H1 (cell line): ENCODE measurements at regions of chr16 and their contacts with region 1.

Region 1: DNA sequence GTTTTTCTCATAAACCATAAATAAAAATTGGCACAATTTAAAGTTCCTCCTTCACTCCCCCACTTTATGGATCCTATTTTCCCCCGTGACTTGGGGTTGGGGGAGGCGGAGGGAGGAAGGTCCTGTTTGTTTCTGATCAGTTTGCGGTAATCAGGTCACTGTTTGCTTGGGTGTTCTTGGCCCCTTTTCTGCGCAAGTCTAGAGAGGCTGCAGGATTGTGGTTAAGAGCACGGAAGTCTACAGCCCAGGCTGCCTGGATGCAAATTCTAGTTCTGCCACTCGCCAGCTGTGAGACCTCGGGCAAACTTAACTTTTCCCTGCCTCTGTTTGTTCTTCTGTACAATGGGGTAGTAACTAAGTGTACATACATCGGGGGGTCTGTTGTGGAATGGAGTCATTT is 12.1 kb downstream of the ATP2C2 start:
- DNase-seq: no peak
- H3K4me3 ChIP-seq: no peak overlapping the region
- H3K27ac ChIP-seq: no peak overlapping the region
- H3K4me1 ChIP-seq: peaks cover 0 to 11% (median 5%) of the 10 kb centered on the region in 4 experiments; a peak in 3 of 7 replicates
- H3K27me3 ChIP-seq: no peaks in the 10 kb centered on the region; a peak in 1 of 7 replicates
- CTCF ChIP-seq: no peak
- EP300 ChIP-seq: no peak
- POLR2A ChIP-seq: no peak
- RAD21 ChIP-seq: no peak

Region 2: GRCh38 chr16:84356176-84357116 is 24.0 kb before region 1 on chr16:
- CTCF ChIA-PET with region 1: no interaction called
- POLR2A ChIA-PET with region 1: no interaction called
- DNase-seq: no peak
- H3K4me3 ChIP-seq: no peak overlapping the region
- H3K27ac ChIP-seq: no peak overlapping the region
- H3K4me1 ChIP-seq: no peaks in the 10 kb centered on the region; a peak in 2 of 7 replicates
- H3K27me3 ChIP-seq: no peaks in the 10 kb centered on the region
- CTCF ChIP-seq: no peak
- EP300 ChIP-seq: no peak
- POLR2A ChIP-seq: no peak
- RAD21 ChIP-seq: no peak

Region 3: GRCh38 chr16:84368308-84368996 is 12.0 kb before region 1 on chr16 and contains the start of gene ATP2C2:
- CTCF ChIA-PET with region 1: interaction called, 6 read pairs
- POLR2A ChIA-PET with region 1: interaction called, 17 read pairs
- DNase-seq: peak; percentile 66 to 93
- H3K4me3 ChIP-seq: peak within 1 kb of the TSS; percentile 70 to 83 (median 76)
- H3K27ac ChIP-seq: no peak within 1 kb of the TSS
- H3K4me1 ChIP-seq: peaks cover 0 to 18% (median 11%) of the 10 kb centered on the region in 4 experiments; a peak in 6 of 7 replicates
- H3K27me3 ChIP-seq: peaks cover 0 to 18% (median 15%) of the 10 kb centered on the region in 4 experiments; a peak in 6 of 7 replicates
- CTCF ChIP-seq: no peak
- EP300 ChIP-seq: no peak; a peak in 1 of 3 replicates
- POLR2A ChIP-seq: peak in 1 of 2 experiments; percentile 44; a peak in 1 of 3 replicates
- RAD21 ChIP-seq: no peak; a peak in 1 of 4 replicates
- total RNA-seq, gene ATP2C2: 2.8 and 3.6 TPM in 2 replicates